Tibial artery (tissue), 4 donors: ENCODE measurements at regions of chr9 and their contacts with region 1.

Region 1: GRCh38 chr9:114348906-114349482 is 19.3 kb downstream of the ORM2 start:
- DNase-seq: peak; percentile 92 to 97
- H3K4me3 ChIP-seq: no peak overlapping the region
- H3K27ac ChIP-seq: peak overlapping the region; percentile 72 to 79
- H3K4me1 ChIP-seq: peaks cover 0 to 38% (median 19%) of the 10 kb centered on the region in 4 donors
- H3K27me3 ChIP-seq: no peaks in the 10 kb centered on the region
- CTCF ChIP-seq: no peak

Region 2: GRCh38 chr9:114385412-114386181 is 36.6 kb after region 1 on chr9:
- intact Hi-C with region 1: loop called (anchors 2 kb)
- DNase-seq: peak; percentile 86 to 94
- H3K4me3 ChIP-seq: peak overlapping the region; percentile 65 to 76
- H3K27ac ChIP-seq: peak overlapping the region; percentile 94 to 96
- H3K4me1 ChIP-seq: peaks cover 6 to 73% (median 64%) of the 10 kb centered on the region in 4 donors
- H3K27me3 ChIP-seq: no peaks in the 10 kb centered on the region
- CTCF ChIP-seq: no peak